Esophagus muscularis mucosa (tissue), 4 donors: ENCODE measurements at regions of chr16 and their contacts with region 1.

Region 1: DNA sequence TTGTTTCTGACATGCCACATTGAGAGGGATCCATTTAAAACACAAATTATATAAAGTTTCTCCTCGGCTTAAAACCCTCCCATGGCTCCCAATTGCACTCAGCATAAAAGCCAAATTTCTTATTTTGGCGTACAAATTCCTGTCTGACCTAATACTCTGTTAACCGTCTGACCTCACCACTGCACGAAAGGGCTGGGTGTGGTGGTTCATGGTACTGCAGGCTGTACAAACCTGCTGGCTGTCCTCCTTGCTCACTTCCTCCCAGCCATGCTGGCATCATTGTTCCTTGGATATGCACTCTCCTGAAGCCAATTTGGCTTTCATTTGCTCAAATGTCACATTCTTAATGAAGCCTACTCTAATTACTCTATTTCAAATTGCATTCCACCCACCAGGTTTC is 301.6 kb upstream of the C16orf82 start:
- DNase-seq: no peak
- H3K4me3 ChIP-seq: no peak overlapping the region
- H3K27ac ChIP-seq: no peak overlapping the region
- H3K4me1 ChIP-seq: no peaks in the 10 kb centered on the region
- H3K27me3 ChIP-seq: no peaks in the 10 kb centered on the region
- CTCF ChIP-seq: peak in 1 of 3 experiments; percentile 40
- EP300 ChIP-seq: no peak
- POLR2A ChIP-seq: no peak

Region 2: GRCh38 chr16:26709175-26709574 is 55.9 kb before region 1 on chr16:
- intact Hi-C with region 1: loop called (anchors 10 kb)
- DNase-seq: no peak
- H3K4me3 ChIP-seq: no peak overlapping the region
- H3K27ac ChIP-seq: no peak overlapping the region
- H3K4me1 ChIP-seq: no peaks in the 10 kb centered on the region
- H3K27me3 ChIP-seq: no peaks in the 10 kb centered on the region
- CTCF ChIP-seq: no peak
- EP300 ChIP-seq: no peak
- POLR2A ChIP-seq: no peak